ENCODE measurements at regions of chr19 and their contacts with region 1.

Region 1: GRCh38 chr19:41785653-41786052 is 10.7 kb upstream of the CEACAM3 start:
- DNase-seq: no peak
- H3K4me3 ChIP-seq: no peak overlapping the region
- CTCF ChIP-seq: peak; percentile 78

Region 2: GRCh38 chr19:41775360-41775695 is 10.3 kb before region 1 on chr19:
- CTCF ChIA-PET with region 1: interaction called, 18 read pairs
- POLR2A ChIA-PET with region 1: no interaction called
- DNase-seq: no peak
- H3K4me3 ChIP-seq: no peak overlapping the region
- CTCF ChIP-seq: no peak

Measured in AG04449 (cell line).